Body of pancreas (tissue), 4 donors: ENCODE measurements at regions of chr4 and their contacts with region 1.

Region 1: GRCh38 chr4:185656467-185656931 is 121.2 kb upstream of the PDLIM3 start:
- DNase-seq: peak; percentile 34 to 69 (median 64)
- ATAC-seq: peak; percentile 68
- H3K4me3 ChIP-seq: no peak overlapping the region
- H3K27ac ChIP-seq: peak overlapping the region; percentile 48 to 81 (median 70)
- H3K4me1 ChIP-seq: peaks cover 36% of the 10 kb centered on the region
- H3K27me3 ChIP-seq: no peaks in the 10 kb centered on the region
- CTCF ChIP-seq: peak in 5 of 7 experiments; percentile 17 to 52 (median 33)
- POLR2A ChIP-seq: peak in 2 of 3 donors; percentile 18 to 28

Region 2: DNA sequence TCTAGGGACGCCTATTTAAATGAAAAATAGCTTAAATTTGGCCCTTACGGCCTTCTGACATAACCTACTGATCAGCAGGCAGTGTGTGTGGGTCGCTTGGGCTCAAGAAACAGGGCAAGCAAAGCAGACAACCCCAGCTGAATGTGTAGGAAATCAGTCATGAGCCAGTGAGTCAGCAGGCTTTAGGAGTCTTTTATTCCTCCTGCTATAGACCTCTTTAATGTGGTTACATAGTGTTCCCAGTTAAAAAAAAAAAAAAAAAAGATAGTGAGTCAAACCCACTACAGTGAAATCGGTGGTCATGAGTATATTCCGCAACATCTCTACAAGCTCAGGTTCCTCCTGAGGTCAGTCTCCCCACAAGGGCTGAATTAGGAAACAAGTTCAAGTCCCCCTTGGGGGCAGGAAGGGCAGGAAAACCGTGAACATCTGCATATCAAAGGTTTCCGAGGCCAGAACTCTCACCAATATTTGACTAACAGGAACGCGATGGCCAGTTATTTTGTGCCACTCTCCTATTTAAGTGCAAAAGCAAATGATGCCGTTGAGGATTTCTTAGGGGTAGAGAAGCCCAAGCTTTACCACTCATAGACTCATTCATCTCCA is 863.4 kb before region 1 on chr4:
- intact Hi-C with region 1: no loop called
- DNase-seq: peak in 1 of 4 donors; percentile 63
- ATAC-seq: no peak
- H3K4me3 ChIP-seq: no peak overlapping the region
- H3K27ac ChIP-seq: peak overlapping the region in 1 of 4 donors; percentile 21
- H3K4me1 ChIP-seq: peaks cover 29% of the 10 kb centered on the region
- H3K27me3 ChIP-seq: no peaks in the 10 kb centered on the region
- CTCF ChIP-seq: no peak
- POLR2A ChIP-seq: no peak

Region 3: DNA sequence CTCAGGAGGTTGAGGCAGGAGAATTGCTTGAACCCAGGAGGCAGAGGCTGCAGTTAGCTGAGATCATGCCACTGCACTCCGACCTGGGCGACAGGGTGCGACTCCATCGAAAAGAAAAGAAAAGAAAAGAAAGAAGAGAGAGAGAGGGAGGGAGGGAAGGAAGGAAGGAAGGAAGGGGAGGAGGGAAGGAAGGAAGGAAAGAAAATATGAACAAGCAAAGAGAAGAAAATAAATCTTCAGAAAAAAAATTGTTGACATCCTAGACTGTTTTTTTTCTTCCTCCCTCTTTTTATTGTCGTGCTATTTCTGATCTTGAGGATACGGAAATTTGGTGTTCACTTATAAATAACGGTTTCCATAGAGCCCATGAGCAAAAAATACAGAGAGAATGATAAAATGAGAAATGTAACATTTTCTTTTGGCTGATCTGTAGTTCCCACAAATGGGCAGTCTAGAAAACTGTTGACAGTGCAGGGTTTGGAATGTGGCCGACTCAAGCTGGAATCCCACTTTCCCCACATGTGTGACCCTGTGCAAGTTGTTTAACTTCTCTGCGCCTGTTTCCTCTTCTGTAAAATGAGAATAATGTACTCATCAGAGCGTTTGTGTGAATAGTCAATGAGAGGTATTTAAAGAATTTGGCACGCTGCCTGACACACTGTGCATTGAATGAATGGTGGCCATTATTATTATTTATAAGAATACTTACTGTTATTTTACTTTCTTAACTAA is 136.1 kb after region 1 on chr4:
- intact Hi-C with region 1: loop called (anchors 10 kb)
- DNase-seq: no peak
- ATAC-seq: no peak
- H3K4me3 ChIP-seq: no peak overlapping the region
- H3K27ac ChIP-seq: peak overlapping the region in 3 of 4 donors; percentile 7 to 16 (median 8)
- H3K4me1 ChIP-seq: peaks cover 34% of the 10 kb centered on the region
- H3K27me3 ChIP-seq: no peaks in the 10 kb centered on the region
- CTCF ChIP-seq: no peak
- POLR2A ChIP-seq: no peak